ENCODE measurements at regions of chr3 and their contacts with region 1.

Region 1: DNA sequence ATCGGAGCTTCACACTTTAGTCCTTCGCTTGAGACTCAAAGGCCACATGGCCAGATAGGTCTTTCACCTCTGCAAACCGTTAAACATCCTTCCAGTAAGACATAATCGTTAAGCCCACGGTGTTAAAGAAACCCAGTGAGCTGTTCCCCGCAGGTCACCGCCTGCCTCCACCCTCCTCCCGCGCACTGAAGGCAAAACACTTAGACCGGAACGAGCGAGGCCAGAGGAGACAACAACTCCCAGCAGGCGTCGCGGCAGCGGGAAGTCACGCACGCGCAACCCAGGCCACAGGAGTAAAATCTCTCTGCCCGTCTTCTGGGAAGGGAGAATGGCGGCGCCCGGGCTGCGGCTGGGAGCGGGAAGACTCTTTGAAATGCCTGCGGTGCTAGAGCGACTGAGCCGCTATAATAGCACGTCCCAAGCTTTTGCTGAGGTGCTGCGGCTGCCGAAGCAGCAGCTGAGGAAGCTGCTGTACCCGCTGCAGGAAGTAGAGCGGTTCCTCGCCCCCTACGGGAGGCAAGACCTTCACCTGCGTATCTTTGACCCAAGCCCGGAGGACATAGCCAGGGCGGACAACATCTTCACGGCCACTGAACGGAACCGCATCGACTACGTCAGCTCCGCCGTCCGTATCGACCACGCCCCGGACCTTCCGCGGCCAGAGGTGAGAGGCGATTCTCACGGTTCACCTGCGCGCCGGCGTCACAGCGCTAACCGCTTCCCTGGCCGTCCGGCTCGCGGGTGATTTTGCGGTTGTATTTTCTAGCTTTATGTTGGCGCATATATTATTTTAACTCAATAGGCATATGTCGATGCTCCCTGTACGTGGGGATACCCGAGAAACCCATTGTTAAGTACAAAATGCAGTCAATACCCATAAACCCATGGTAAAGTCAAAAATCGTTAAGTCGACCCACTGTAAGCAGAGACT is at the start of gene GTPBP8:
- DNase-seq: peak; percentile 93
- ATAC-seq: peak; percentile 94
- H3K4me3 Mint-ChIP-seq: peak within 1 kb of the TSS; percentile 81
- H3K27ac Mint-ChIP-seq: peak within 1 kb of the TSS; percentile 93
- H3K4me1 Mint-ChIP-seq: peaks cover 63% of the 10 kb centered on the region
- H3K27me3 Mint-ChIP-seq: no peaks in the 10 kb centered on the region
- total RNA-seq, gene GTPBP8: 24.6 to 25.3 TPM

Region 2: GRCh38 chr3:112979240-112979832 is 11.6 kb before region 1 on chr3:
- CTCF ChIA-PET with region 1: interaction called, 16 read pairs
- DNase-seq: no peak
- ATAC-seq: no peak
- H3K4me3 Mint-ChIP-seq: no peak overlapping the region
- H3K27ac Mint-ChIP-seq: no peak overlapping the region
- H3K4me1 Mint-ChIP-seq: peaks cover 53% of the 10 kb centered on the region
- H3K27me3 Mint-ChIP-seq: no peaks in the 10 kb centered on the region

Region 3: DNA sequence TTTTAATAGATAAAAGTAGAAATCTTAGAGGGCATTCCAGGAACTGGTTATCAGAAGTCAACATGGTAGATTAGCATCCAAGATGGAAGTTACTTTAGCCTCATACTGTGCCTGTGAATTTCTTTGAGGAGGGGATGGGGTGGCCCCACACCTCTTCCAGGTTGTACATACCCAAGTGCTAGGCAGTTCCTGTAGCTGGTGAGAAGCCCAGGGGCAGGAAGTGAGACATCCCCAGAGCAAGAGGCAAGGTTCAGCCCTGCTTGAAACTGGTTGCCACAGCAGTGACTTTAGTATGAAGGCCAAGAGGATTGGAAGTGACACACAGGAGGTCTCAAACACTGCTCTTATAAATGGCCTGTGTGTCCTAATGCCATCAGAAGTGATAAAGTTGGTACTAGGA is 11.7 kb after region 1 on chr3:
- CTCF ChIA-PET with region 1: interaction called, 12 read pairs
- DNase-seq: peak; percentile 76
- ATAC-seq: peak; percentile 84
- H3K4me3 Mint-ChIP-seq: no peak overlapping the region
- H3K27ac Mint-ChIP-seq: peak overlapping the region; percentile 79
- H3K4me1 Mint-ChIP-seq: peaks cover 64% of the 10 kb centered on the region
- H3K27me3 Mint-ChIP-seq: no peaks in the 10 kb centered on the region

Measured in activated CD8-positive, alpha-beta memory T cell treated with anti-CD3 and anti-CD28 coated beads, Interleukin-2, amount 10 ng/mL, durations not matched to agents 7 days and 5 days (primary cell).